ENCODE measurements at regions of chr11 and their contacts with region 1.

Region 1: DNA sequence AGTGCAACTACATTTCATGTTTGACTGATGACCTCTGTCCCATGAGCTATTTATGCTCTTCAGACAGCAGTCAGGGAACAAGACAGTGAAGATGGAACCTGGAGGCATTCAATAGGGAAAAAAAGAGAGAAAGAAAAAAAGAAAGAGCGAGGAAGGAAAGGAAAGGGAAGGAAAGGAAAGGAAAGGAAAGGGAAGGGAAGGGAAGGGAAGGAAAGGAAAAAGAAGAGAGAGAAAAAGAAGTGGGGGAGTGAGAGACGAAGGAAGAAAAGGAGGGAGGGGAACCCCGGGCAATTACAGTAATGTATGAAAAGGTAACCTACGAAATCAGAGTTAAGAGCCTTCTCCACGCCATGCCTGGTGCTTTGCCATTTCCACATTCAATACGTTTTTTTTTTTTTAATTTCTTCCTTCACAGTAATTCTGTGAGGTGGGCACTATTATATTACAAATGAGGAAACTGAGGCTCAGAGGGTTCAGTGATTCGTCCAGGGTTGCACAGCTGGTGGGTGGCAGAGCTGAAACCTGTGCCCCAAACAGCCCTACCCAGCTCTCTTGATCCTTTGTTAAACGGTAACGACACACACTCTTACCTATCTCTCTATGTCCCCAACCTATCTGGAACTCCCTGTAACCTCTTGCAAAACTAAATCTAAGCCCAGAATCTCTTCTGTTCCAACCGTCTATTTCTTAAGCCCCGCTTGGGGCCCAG is 39.3 kb downstream of the ETS1 start:
- DNase-seq: no peak
- H3K4me3 Mint-ChIP-seq: peak overlapping the region; percentile 76
- H3K27ac Mint-ChIP-seq: peak overlapping the region; percentile 86
- H3K4me1 Mint-ChIP-seq: peaks cover 87% of the 10 kb centered on the region
- H3K27me3 Mint-ChIP-seq: peaks cover 1% of the 10 kb centered on the region

Region 2: GRCh38 chr11:128318856-128319474 is 229.1 kb before region 1 on chr11:
- CTCF ChIA-PET with region 1: no interaction called
- POLR2A ChIA-PET with region 1: no interaction called
- DNase-seq: peak; percentile 62
- H3K4me3 Mint-ChIP-seq: no peak overlapping the region
- H3K27ac Mint-ChIP-seq: peak overlapping the region; percentile 84
- H3K4me1 Mint-ChIP-seq: peaks cover 82% of the 10 kb centered on the region
- H3K27me3 Mint-ChIP-seq: no peaks in the 10 kb centered on the region

Region 3: GRCh38 chr11:128530118-128531074 is 17.7 kb before region 1 on chr11:
- CTCF ChIA-PET with region 1: interaction called, 11 read pairs
- POLR2A ChIA-PET with region 1: interaction called, 7 read pairs
- DNase-seq: no peak
- H3K4me3 Mint-ChIP-seq: no peak overlapping the region
- H3K27ac Mint-ChIP-seq: no peak overlapping the region
- H3K4me1 Mint-ChIP-seq: peaks cover 49% of the 10 kb centered on the region
- H3K27me3 Mint-ChIP-seq: no peaks in the 10 kb centered on the region